ENCODE measurements at regions of chr12 and their contacts with region 1.

Region 1: GRCh38 chr12:123983822-123984485 is 10.9 kb downstream of the ZNF664 start:
- DNase-seq: no peak
- ATAC-seq: peak; percentile 67
- H3K4me3 ChIP-seq: no peak overlapping the region
- H3K27ac ChIP-seq: no peak overlapping the region
- H3K4me1 ChIP-seq: no peaks in the 10 kb centered on the region
- H3K27me3 ChIP-seq: no peaks in the 10 kb centered on the region

Region 2: DNA sequence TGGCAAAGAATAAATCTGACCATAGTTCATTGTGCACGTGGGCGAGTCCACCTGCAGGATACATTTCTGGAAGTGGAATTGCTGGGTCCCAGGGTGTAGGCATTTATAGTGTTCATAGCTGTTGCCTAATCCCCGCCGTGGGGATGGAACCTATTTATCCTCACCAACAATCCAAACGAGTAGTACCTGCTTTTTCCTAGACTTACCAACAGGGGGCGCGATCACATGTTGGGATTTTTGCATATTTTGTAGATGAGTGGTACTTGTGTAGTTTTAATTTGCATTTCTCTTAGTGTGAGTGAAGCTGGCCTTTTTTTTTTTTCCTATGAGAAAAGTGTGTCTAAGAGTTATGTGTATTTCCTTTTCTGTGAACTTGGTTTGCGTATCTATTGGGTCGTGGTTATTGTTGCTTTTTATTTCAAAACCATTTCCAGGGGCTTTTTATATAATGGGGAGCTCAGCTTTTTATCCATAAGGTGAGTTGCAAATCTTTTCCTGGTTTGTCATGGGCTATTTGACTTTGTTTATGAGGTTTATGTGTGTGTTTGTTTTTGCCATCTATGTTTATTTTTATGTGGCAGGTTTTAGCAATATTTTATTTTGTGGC is 78.5 kb before region 1 on chr12:
- intact Hi-C with region 1: loop called (anchors 1 to 2 kb)
- DNase-seq: peak; percentile 67 to 68
- ATAC-seq: peak; percentile 62
- H3K4me3 ChIP-seq: no peak overlapping the region
- H3K27ac ChIP-seq: no peak overlapping the region
- H3K4me1 ChIP-seq: no peaks in the 10 kb centered on the region
- H3K27me3 ChIP-seq: no peaks in the 10 kb centered on the region

Region 3: DNA sequence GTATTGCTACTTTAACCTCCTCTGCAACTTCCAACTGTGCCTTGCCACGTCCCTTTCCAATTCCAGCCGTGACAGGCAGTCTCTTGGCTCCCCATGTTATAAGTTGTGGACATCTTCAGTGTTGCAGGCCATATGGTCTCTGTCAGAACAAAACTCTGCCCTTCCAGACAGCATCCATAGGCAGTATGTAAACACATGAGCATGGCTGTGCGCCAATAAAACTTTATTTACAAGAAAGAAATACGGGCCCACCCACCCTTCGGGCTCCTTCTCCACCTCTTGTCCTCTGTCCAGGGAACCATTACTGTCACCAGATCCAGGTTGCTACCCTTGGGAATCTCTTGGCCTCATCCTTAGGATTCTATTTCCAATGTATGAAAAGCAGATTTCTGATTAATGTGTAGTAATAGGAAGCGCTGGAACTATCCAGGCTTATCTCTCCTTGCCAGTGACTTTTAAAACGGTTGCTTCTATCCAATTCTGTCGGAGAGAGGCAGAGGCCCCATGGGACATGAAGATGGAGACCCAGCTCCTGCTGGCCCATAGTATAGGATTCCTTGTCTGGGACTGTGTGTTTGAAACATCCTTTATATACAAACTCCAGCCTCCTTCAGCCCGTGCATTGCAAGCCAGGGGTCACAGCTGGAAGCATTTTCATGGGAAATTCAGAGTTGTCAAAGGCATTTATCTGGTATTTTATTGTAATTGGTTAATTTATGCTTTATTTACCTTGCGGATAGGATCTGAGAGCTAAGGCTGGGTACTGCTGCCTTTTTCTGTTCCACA is 103.5 kb after region 1 on chr12:
- intact Hi-C with region 1: no loop called
- DNase-seq: no peak
- ATAC-seq: no peak
- H3K4me3 ChIP-seq: no peak overlapping the region
- H3K27ac ChIP-seq: no peak overlapping the region
- H3K4me1 ChIP-seq: no peaks in the 10 kb centered on the region
- H3K27me3 ChIP-seq: no peaks in the 10 kb centered on the region